ENCODE measurements at regions of chr5 and their contacts with region 1.

Region 1: GRCh38 chr5:177454397-177455035 is 7.9 kb downstream of the PRR7 start:
- DNase-seq: peak; percentile 94
- ATAC-seq: peak; percentile 50
- H3K4me3 Mint-ChIP-seq: peak overlapping the region; percentile 78
- H3K27ac Mint-ChIP-seq: peak overlapping the region; percentile 75
- H3K4me1 Mint-ChIP-seq: peaks cover 30% of the 10 kb centered on the region
- H3K27me3 Mint-ChIP-seq: peaks cover 3% of the 10 kb centered on the region

Region 2: DNA sequence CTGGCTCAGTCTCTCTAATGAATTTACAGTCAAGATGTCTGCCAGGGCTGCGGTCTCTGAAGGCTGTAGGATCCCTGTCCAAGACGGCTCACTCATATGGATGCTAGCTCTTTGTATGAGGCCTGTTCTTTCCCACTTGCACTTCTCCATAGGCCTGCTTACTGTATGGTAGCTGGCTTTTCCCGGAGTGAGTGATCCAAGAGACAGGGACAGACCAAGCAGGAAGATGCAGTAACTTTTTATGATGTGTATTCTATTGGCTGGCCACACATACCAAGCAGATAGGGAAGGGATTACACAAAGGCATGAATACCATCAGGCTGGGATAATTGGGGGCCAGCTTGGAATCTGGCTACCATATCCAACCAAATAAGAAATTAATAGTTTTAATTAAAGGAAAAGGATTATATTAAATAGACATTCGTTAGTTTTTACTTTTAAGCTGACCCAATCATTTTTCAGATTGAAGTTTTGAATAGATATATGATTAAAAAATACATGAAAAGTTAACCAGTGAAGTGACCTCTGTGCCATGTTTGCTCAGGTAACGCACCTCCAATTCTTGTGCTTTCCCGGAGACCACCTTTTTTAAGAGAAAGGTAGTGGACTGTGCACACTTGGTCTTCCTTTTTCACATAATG is 300.4 kb before region 1 on chr5:
- CTCF ChIA-PET with region 1: no interaction called
- POLR2A ChIA-PET with region 1: no interaction called
- DNase-seq: no peak
- ATAC-seq: no peak
- H3K4me3 Mint-ChIP-seq: no peak overlapping the region
- H3K27ac Mint-ChIP-seq: no peak overlapping the region
- H3K4me1 Mint-ChIP-seq: no peaks in the 10 kb centered on the region
- H3K27me3 Mint-ChIP-seq: no peaks in the 10 kb centered on the region

Region 3: GRCh38 chr5:177351385-177352329 is 102.9 kb before region 1 on chr5 and contains the start of gene LMAN2:
- CTCF ChIA-PET with region 1: interaction called, 18 read pairs
- POLR2A ChIA-PET with region 1: no interaction called
- DNase-seq: peak; percentile 96
- ATAC-seq: peak; percentile 99
- H3K4me3 Mint-ChIP-seq: peak within 1 kb of the TSS; percentile 97
- H3K27ac Mint-ChIP-seq: peak within 1 kb of the TSS; percentile 100
- H3K4me1 Mint-ChIP-seq: peaks cover 66% of the 10 kb centered on the region
- H3K27me3 Mint-ChIP-seq: no peaks in the 10 kb centered on the region
- total RNA-seq, gene LMAN2: 119 to 127 TPM

Region 4: GRCh38 chr5:177403792-177404640 is 50.5 kb before region 1 on chr5:
- CTCF ChIA-PET with region 1: interaction called, 337 read pairs
- POLR2A ChIA-PET with region 1: interaction called, 54 read pairs
- DNase-seq: peak; percentile 89
- ATAC-seq: peak; percentile 92
- H3K4me3 Mint-ChIP-seq: peak overlapping the region; percentile 78
- H3K27ac Mint-ChIP-seq: peak overlapping the region; percentile 74
- H3K4me1 Mint-ChIP-seq: peaks cover 48% of the 10 kb centered on the region
- H3K27me3 Mint-ChIP-seq: peaks cover 21% of the 10 kb centered on the region

Region 5: DNA sequence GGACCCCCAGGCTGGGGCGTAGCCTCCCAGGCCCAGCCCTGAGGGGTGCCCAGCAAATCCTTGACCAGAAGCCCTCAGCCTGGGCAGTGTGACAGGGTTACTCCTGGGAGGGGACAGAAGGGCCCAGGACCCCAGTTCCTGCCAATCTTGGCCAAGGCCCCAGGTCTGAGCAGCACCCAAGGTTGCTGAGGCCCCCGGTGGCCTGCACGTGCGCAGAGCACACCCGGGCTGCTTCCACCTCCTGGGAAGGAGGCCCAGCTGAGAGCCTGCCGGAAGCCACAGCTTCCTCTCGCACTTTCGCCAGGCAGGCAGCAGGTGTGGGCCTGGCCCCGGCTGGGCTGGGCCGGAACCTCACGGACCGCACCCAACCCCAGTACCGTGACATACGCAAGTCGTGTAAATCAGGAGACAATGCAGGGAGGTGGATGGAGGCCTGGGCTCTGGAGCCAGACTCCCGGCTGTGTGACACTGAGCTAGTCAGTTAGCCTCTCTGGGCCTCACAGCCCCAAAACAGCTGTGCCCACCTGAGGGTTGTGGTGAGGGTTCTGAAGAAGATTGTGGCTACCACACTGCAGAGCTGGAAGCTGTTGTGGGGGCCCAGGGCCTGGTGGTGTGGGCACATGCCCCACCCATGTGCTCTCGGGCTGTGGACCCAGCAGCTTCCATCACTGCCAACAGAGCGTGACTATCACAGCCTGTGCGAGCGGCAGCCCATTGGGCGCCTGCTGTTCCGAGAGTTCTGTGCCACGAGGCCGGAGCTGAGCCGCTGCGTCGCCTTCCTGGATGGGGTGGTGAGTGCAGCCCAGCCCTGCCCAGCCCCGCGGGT is 23.0 kb before region 1 on chr5:
- CTCF ChIA-PET with region 1: interaction called, 99 read pairs
- POLR2A ChIA-PET with region 1: interaction called, 245 read pairs
- DNase-seq: peak; percentile 90
- ATAC-seq: peak; percentile 59
- H3K4me3 Mint-ChIP-seq: peak overlapping the region; percentile 97
- H3K27ac Mint-ChIP-seq: peak overlapping the region; percentile 93
- H3K4me1 Mint-ChIP-seq: peaks cover 76% of the 10 kb centered on the region
- H3K27me3 Mint-ChIP-seq: no peaks in the 10 kb centered on the region

Region 6: DNA sequence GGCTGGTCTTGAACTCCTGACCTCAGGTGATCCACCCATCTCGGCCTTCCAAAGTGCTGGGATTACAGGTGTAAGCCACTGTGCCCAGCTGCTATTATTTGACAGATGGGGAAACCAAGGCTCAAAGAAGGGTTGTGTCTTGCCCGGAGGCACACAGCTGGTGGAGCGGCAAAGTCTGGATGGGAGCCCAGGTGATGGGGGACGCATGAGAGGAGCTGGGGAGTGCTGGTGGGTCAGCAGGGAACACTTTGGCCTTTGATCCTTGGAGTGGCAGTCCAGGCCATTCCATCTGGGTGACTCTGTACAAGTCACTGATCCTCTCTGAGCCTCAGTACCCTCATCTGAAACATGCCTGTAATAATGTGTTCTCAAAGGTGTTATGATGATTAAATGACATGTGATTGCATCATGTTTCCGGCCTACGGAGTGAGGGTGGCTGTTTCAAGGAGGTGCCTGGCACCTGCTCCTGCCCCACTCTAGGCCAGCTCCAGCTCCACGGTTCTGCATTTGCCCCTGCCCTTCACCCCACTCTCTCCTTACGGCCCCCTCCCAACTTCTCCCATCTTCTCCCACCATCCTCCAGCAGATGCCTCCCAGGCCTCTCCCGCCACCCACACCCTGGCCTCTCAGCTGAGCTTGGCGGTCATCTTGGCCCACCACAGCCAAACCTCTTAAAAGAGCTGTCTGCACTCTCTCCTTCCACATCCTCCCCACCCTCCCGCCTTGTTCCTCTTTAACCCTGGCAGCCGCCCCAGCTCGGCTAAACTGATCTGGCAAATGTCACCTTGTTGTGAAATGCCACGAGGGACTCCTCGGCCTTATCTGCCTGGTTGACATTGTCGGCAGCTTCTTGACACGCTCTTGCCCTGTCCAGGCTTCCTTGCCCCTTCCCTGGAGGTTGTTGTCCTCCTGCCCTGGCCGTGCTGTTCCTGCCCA is 24.5 kb after region 1 on chr5:
- CTCF ChIA-PET with region 1: interaction called, 21 read pairs
- POLR2A ChIA-PET with region 1: interaction called, 4 read pairs
- DNase-seq: peak; percentile 77
- ATAC-seq: peak; percentile 83
- H3K4me3 Mint-ChIP-seq: peak overlapping the region; percentile 39
- H3K27ac Mint-ChIP-seq: peak overlapping the region; percentile 92
- H3K4me1 Mint-ChIP-seq: peaks cover 60% of the 10 kb centered on the region
- H3K27me3 Mint-ChIP-seq: peaks cover 3% of the 10 kb centered on the region

Region 7: DNA sequence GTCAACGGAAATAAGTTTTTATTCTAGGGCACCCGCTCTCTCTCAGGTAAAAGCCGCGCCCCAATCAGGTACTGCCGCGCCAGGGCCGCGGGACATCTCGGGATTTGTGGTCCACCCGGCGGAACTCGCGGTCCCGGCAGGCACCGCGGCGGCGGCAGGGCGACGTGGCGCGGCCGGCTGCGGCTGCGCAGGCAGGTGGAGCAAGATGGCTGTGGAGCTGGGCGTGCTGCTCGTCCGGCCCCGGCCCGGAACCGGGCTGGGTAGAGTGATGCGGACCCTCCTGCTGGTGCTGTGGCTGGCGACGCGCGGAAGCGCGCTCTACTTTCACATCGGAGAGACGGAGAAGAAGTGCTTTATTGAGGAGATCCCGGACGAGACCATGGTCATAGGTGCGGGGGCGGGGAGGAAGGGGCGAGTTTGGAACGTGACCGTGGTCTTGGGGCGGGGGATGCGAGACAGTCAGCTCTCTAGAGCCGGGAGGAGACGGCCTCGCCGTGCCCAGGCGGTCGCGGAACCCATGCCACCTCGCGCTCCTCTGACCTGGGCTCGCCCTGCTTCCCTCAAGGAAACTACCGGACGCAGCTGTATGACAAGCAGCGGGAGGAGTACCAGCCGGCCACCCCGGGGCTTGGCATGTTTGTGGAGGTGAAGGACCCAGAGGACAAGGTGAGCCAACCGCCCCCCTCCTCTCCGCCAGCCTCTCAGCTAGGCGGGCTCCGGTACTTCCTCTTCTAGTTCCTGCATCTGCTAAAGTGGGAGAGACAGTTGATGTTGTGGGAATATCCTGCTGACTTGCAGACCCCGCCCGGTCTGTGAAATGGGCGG is 137.7 kb after region 1 on chr5 and contains the start of gene TMED9:
- CTCF ChIA-PET with region 1: no interaction called
- POLR2A ChIA-PET with region 1: no interaction called
- DNase-seq: peak; percentile 91
- ATAC-seq: peak; percentile 99
- H3K4me3 Mint-ChIP-seq: peak within 1 kb of the TSS; percentile 96
- H3K27ac Mint-ChIP-seq: peak within 1 kb of the TSS; percentile 97
- H3K4me1 Mint-ChIP-seq: peaks cover 21% of the 10 kb centered on the region
- H3K27me3 Mint-ChIP-seq: peaks cover 21% of the 10 kb centered on the region
- total RNA-seq, gene TMED9: 104 to 109 TPM